ENCODE measurements at regions of chr11 and their contacts with region 1.

Region 1: GRCh38 chr11:16785520-16786128 is 47.2 kb downstream of the C11orf58 start:
- DNase-seq: no peak
- H3K4me3 ChIP-seq: no peak overlapping the region
- CTCF ChIP-seq: peak; percentile 91

Region 2: GRCh38 chr11:16771350-16772140 is 14.1 kb before region 1 on chr11:
- CTCF ChIA-PET with region 1: interaction called, 114 read pairs
- POLR2A ChIA-PET with region 1: no interaction called
- DNase-seq: no peak
- H3K4me3 ChIP-seq: no peak overlapping the region
- CTCF ChIP-seq: no peak

Region 3: DNA sequence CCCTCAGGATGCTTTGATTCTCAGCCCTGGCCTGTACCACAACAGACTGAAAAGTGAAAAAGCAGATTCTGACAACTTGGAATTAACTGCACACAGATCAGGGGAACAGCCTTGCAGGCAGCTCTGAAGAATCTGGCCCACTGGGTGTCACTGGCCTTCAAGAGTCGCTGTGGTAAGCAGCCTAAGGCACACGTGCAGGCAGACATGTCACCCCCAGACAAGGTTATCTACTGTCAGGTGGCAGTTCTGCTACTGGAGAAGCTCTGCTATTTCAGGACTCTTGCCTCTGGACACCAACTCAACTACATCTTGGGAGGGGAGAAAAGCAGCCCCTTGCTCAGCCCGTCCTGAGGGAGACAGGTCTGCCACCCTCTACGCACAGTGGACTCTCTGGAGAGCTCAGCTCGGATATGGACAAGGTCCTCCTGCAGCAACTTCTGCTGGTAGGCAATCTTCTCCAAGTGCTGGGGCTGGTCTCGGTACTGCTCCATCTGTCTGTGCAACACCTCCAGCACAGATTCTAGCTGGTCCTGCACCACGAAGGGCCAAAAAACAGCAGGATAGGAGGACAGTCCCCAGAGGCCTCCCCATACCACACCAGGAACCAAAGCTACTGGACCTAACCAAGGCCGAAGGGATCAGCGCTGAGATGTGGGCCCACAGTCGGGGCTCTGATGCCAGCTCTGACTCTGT is 15.8 kb after region 1 on chr11:
- CTCF ChIA-PET with region 1: interaction called, 26 read pairs
- POLR2A ChIA-PET with region 1: no interaction called
- DNase-seq: no peak
- H3K4me3 ChIP-seq: no peak overlapping the region
- CTCF ChIP-seq: no peak

Region 4: GRCh38 chr11:16815043-16815767 is 29.6 kb after region 1 on chr11:
- CTCF ChIA-PET with region 1: interaction called, 28 read pairs
- POLR2A ChIA-PET with region 1: no interaction called
- DNase-seq: no peak
- H3K4me3 ChIP-seq: no peak overlapping the region
- CTCF ChIP-seq: no peak

Region 5: DNA sequence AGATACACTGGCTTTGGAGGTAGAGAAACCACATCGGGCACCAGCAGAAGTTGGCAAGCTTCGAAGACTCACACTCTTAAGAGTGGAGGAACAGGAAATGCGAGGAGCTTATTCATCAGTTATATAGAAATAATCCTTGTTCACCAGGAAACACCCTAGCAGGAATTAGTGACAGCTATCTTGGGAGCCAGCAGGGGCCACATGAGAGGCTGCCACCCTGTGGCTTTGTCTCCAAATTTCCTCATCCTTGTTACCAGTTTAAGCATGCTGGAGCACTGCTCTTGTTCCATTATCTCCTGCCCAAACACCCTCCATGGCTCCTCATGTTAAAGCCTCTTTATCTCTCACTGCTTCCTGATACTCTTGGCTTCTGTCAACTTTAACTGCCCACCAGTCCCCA is 97.5 kb after region 1 on chr11:
- CTCF ChIA-PET with region 1: interaction called, 12 read pairs
- POLR2A ChIA-PET with region 1: no interaction called
- DNase-seq: no peak
- H3K4me3 ChIP-seq: no peak overlapping the region
- CTCF ChIP-seq: no peak

Region 6: DNA sequence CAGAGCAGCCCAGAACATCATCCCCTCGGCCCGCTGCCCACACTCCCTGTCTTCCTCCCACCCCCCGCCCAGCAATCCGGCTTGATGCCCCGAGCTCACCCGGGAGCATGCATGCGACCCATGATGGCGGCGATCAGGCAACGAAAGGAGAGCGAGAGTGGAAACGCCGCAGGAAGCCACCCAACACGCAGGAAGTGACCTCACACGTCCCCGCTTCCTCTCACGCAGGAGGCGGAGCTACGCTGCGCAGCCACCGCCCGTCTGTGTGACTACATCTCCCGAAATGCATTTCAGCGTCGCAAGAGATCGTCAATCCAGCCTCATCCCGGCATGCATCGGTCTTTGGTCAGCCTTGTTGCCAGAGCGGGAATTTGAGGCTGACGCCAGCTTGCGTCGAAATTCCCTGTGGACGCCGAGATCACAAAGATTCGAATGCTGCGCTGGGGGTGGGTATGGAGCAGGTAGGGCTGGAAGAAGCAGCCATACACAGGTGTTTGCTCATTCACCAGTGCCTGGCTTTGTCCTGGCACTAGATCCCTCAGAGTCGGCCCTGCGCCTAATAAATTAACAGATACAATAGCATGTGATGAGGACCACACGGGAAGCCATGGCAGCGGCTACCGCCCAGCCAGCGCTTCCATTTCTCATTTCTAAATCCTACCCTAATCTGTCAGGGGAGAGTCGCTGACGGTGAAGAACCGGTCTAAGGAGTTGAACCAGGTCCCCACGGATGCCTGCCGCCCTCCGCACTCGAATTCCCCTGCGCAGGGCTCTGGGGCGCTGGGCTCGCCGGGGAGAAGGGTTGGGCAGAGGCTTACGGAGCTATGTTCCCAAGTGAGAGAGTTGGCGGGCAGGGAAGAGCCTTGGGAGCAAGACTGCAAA is 292.1 kb after region 1 on chr11 and contains the start of gene RPS13:
- CTCF ChIA-PET with region 1: interaction called, 12 read pairs
- POLR2A ChIA-PET with region 1: no interaction called
- DNase-seq: peak; percentile 91
- H3K4me3 ChIP-seq: peak within 1 kb of the TSS; percentile 98
- CTCF ChIP-seq: no peak